ENCODE measurements at regions of chr7 and their contacts with region 1.

Region 1: GRCh38 chr7:70678621-70679251 is 453.2 kb upstream of the GALNT17 start:
- DNase-seq: no peak
- H3K4me3 ChIP-seq: no peak overlapping the region
- H3K27ac ChIP-seq: peak overlapping the region in 1 of 4 donors; percentile 11
- H3K4me1 ChIP-seq: peaks cover 0 to 12% (median 0%) of the 10 kb centered on the region in 3 donors
- H3K27me3 ChIP-seq: no peaks in the 10 kb centered on the region
- CTCF ChIP-seq: no peak
- POLR2A ChIP-seq: no peak

Region 2: DNA sequence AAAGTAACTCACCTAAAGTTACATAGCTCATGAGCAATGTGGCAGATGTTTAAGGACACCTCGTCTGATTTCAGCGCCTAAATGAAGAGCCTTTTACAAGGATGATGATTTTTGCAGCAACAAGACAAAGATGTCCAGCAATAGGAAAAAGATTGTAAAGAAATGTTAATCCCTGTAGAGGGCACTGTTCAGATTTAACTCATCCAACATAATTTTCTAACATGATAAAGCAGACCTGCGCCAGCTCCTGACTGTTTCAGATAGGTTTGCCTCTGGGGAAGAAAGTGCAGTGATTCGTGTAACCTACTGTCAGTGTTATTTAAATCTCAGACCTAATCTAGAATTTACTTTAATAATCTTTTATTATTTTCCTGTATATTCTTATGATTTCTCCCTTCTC is 485.2 kb before region 1 on chr7:
- intact Hi-C with region 1: loop called (anchors 10 kb)
- DNase-seq: no peak
- H3K4me3 ChIP-seq: no peak overlapping the region
- H3K27ac ChIP-seq: no peak overlapping the region
- H3K4me1 ChIP-seq: no peaks in the 10 kb centered on the region
- H3K27me3 ChIP-seq: no peaks in the 10 kb centered on the region
- CTCF ChIP-seq: peak in 4 of 6 experiments; percentile 9 to 55 (median 20)
- POLR2A ChIP-seq: no peak